ENCODE measurements at regions of chr17 and their contacts with region 1.

Region 1: DNA sequence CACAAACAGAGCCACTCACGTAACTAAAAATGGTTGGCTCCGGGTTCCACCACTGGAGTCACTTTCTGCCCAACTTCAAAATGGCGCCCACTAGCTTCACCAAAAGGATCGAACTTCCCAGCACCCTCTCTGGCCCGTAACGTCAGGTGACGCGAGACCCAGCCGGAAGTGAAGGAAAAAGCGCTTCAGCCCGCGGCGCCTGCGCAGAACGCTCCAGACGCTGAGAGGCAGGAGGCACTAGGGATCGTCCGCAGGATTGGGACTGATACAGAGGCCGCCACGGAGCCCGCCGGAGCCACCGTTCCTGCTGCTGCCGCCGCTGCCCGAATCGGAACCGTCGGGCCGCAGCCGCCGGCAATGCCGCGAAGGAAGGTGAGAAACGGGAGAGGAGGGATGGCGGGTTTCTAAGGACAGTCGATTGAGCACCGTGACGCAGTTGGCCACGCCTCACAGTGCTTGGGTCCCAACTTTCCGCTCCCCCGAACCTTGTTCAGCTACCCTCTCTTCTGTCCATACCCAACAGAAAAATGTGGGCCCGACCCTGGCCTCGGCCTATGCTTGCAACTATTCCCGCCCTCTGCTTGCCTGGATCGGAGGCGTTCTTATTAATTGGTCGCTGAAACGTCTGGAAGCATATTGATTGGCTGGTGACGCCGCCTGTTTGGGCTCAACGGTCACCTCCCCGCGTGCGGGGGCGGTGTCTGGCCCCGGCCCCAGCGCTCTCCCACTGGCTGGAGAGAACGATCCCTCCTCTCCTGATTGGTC is at the start of gene KAT7:
- DNase-seq: peak; percentile 98 to 100
- ATAC-seq: peak; percentile 80 to 94 (median 85)
- H3K4me3 ChIP-seq: peak within 1 kb of the TSS; percentile 100
- H3K4me3 Mint-ChIP-seq: peak within 1 kb of the TSS; percentile 99
- H3K27ac ChIP-seq: peak within 1 kb of the TSS; percentile 100
- H3K27ac Mint-ChIP-seq: peak within 1 kb of the TSS; percentile 99
- H3K4me1 ChIP-seq: peaks cover 22% of the 10 kb centered on the region
- H3K4me1 Mint-ChIP-seq: peaks cover 52 to 55% of the 10 kb centered on the region in 2 donors
- H3K27me3 ChIP-seq: no peaks in the 10 kb centered on the region
- H3K27me3 Mint-ChIP-seq: no peaks in the 10 kb centered on the region
- CTCF ChIP-seq: no peak
- total RNA-seq, gene KAT7: 195 to 231 (median 213) TPM

Region 2: GRCh38 chr17:49567871-49568694 is 220.6 kb before region 1 on chr17:
- intact Hi-C with region 1: loop called (anchors 2 kb)
- DNase-seq: peak; percentile 85
- ATAC-seq: peak; percentile 66 to 69 (median 68)
- H3K4me3 ChIP-seq: no peak overlapping the region
- H3K4me3 Mint-ChIP-seq: peak overlapping the region; percentile 59
- H3K27ac ChIP-seq: no peak overlapping the region
- H3K27ac Mint-ChIP-seq: peak overlapping the region in 1 of 2 donors; percentile 8
- H3K4me1 ChIP-seq: peaks cover 32% of the 10 kb centered on the region
- H3K4me1 Mint-ChIP-seq: peaks cover 0 to 30% of the 10 kb centered on the region in 2 donors
- H3K27me3 ChIP-seq: no peaks in the 10 kb centered on the region
- H3K27me3 Mint-ChIP-seq: peaks cover 10 to 28% of the 10 kb centered on the region in 2 donors
- CTCF ChIP-seq: peak; percentile 97

Region 3: GRCh38 chr17:49707608-49708514 is 80.8 kb before region 1 on chr17 and contains the start of gene SLC35B1:
- intact Hi-C with region 1: loop called (anchors 1 kb)
- DNase-seq: peak; percentile 95 to 99
- ATAC-seq: peak; percentile 97 to 99 (median 98)
- H3K4me3 ChIP-seq: peak within 1 kb of the TSS; percentile 58
- H3K4me3 Mint-ChIP-seq: peak within 1 kb of the TSS; percentile 96
- H3K27ac ChIP-seq: peak within 1 kb of the TSS; percentile 93
- H3K27ac Mint-ChIP-seq: peak within 1 kb of the TSS; percentile 97 to 98
- H3K4me1 ChIP-seq: peaks cover 27% of the 10 kb centered on the region
- H3K4me1 Mint-ChIP-seq: peaks cover 57 to 60% of the 10 kb centered on the region in 2 donors
- H3K27me3 ChIP-seq: no peaks in the 10 kb centered on the region
- H3K27me3 Mint-ChIP-seq: no peaks in the 10 kb centered on the region
- CTCF ChIP-seq: peak; percentile 62
- total RNA-seq, gene SLC35B1: 74.0 to 121 (median 90.2) TPM

Region 4: DNA sequence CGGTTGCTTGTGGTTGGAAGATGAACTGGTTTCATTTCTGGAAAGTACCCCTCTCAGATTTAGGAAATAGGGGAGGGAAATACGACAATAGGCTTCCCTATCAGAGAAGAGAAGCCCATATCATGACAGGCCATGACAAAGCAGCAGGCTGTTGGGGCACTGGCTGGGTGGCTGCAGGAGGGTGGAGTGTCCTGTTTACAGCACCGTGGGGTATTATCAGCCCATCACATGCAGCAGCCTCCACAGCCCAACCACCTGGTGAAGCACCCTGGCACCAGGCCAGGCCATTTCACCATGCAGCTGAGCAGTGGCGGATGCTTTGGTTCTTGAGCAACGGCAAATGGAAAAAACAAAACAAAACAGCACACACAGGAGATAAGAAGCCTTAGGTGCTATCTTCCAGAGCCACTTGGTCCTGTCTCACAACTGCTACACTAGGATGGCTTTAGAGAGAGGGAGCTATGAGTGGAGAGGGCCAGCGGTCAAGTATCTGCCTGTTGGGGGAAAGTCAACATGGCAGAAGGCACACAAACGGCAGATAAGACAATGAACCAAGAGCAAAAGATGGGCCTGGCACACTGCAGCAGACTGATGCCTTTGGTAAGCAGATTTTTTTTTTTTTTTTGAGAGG is 48.9 kb before region 1 on chr17:
- intact Hi-C with region 1: loop called (anchors 1 kb)
- DNase-seq: peak; percentile 94 to 100
- ATAC-seq: peak; percentile 88 to 99 (median 95)
- H3K4me3 ChIP-seq: peak overlapping the region; percentile 34
- H3K4me3 Mint-ChIP-seq: peak overlapping the region; percentile 94
- H3K27ac ChIP-seq: peak overlapping the region; percentile 94
- H3K27ac Mint-ChIP-seq: peak overlapping the region; percentile 99 to 100
- H3K4me1 ChIP-seq: peaks cover 92% of the 10 kb centered on the region
- H3K4me1 Mint-ChIP-seq: peaks cover 84 to 87% of the 10 kb centered on the region in 2 donors
- H3K27me3 ChIP-seq: no peaks in the 10 kb centered on the region
- H3K27me3 Mint-ChIP-seq: no peaks in the 10 kb centered on the region
- CTCF ChIP-seq: no peak

Region 5: DNA sequence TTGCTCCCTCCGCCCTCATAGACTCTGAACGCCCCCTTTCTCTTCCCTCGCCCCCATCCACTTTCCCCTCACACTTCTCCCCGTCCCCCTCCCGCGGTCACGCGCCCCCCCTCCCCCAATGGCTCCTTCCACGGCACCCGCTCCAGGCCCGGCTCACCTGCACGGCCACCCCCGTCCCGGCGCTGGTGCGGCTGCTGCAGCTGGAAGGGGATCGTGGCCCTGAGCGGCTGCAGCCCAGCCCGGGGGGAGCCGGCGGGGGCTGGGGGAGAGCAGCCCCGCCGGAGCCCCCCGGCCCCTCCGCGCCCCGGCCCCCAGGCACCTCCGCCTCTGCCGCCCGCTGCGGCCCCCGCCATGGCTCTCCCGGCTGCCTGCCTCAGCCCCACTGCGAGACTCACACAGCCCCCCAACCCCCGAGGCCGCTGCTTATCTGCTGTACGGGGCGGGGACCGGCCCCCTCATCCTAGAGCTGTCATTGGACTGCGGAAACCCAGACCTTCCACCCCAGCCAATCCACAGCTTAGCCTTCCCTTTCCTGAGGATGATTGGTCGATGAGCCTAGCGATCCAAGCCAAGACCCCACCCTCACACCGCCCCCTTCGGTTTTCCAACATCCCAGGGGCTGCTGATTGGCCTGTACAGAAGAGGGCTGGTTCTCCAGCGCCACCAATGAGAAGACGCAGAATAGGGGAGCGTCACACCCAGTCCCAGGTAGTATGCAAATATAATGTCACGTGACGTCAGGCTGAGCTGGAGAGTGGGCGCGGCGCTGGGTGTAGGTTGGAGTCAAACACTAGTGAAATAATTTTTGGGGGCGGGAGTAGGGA is 24.7 kb before region 1 on chr17 and contains the start of gene FAM117A:
- intact Hi-C with region 1: loop called (anchors 1 kb)
- DNase-seq: peak; percentile 85 to 98
- ATAC-seq: peak; percentile 80 to 93 (median 85)
- H3K4me3 ChIP-seq: peak within 1 kb of the TSS; percentile 59
- H3K4me3 Mint-ChIP-seq: peak within 1 kb of the TSS; percentile 98
- H3K27ac ChIP-seq: peak within 1 kb of the TSS; percentile 61
- H3K27ac Mint-ChIP-seq: peak within 1 kb of the TSS; percentile 95 to 97
- H3K4me1 ChIP-seq: peaks cover 35% of the 10 kb centered on the region
- H3K4me1 Mint-ChIP-seq: peaks cover 54 to 64% of the 10 kb centered on the region in 2 donors
- H3K27me3 ChIP-seq: no peaks in the 10 kb centered on the region
- H3K27me3 Mint-ChIP-seq: no peaks in the 10 kb centered on the region
- CTCF ChIP-seq: no peak
- total RNA-seq, gene FAM117A: 55.2 to 88.4 (median 79.2) TPM

Region 6: GRCh38 chr17:49775543-49776260 is 13.0 kb before region 1 on chr17:
- intact Hi-C with region 1: no loop called
- DNase-seq: no peak
- ATAC-seq: no peak
- H3K4me3 ChIP-seq: no peak overlapping the region
- H3K4me3 Mint-ChIP-seq: no peak overlapping the region
- H3K27ac ChIP-seq: no peak overlapping the region
- H3K27ac Mint-ChIP-seq: no peak overlapping the region
- H3K4me1 ChIP-seq: no peaks in the 10 kb centered on the region
- H3K4me1 Mint-ChIP-seq: peaks cover 5 to 7% of the 10 kb centered on the region in 2 donors
- H3K27me3 ChIP-seq: no peaks in the 10 kb centered on the region
- H3K27me3 Mint-ChIP-seq: no peaks in the 10 kb centered on the region
- CTCF ChIP-seq: no peak

Measured in natural killer cell (primary cell).